Activated naive CD4-positive, alpha-beta T cell treated with anti-CD3 and anti-CD28 coated beads for 36 hours (primary cell): ENCODE measurements at regions of chr16 and their contacts with region 1.

Region 1: DNA sequence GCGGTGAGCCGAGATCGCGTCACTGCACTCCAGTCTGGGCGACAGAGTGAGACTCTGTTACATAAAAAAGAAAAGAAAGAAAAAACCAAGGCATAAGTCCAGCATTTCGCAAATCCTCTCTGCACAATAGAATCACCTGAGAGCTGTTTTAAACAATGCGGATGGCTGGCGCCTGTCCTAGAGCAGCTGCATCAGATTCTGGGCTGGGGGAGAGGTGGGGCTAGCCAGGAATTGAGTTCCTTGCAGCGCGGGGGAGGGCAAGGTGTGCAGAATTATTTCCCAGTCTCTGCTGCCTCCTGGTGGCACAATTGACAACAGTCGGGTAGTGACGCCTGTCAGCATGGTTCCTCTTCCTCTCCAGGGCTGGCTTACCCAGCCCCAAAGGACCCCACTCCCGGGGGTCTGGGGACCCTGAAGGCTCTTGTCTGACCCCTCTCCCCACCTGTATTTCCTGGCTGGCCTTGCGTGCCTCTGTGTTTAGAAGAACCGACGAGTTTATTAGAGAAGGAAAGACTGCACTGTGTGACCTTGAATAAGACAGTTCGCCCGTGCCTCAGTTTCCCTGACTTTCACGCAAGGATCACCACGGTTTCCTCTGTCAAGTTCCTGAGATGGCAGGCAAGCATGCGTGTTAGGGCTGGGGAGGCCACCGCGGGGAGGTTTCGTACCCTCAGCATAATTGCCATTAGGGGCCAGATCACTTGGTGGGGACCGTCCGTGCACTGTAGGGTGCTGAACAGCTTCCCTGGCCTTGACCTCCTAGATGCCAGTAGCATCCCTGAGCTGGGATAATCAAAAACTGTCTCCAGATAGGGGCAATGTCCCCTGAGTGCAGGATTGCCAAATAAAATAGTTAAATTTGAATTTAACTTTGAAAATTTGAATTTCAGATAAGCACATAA is 41.0 kb upstream of the PLCG2 start:
- DNase-seq: peak; percentile 97
- H3K4me3 Mint-ChIP-seq: peak overlapping the region; percentile 61
- H3K27ac Mint-ChIP-seq: peak overlapping the region; percentile 77
- H3K4me1 Mint-ChIP-seq: peaks cover 12% of the 10 kb centered on the region
- H3K27me3 Mint-ChIP-seq: no peaks in the 10 kb centered on the region

Region 2: GRCh38 chr16:80526425-80527061 is 1211.6 kb before region 1 on chr16:
- CTCF ChIA-PET with region 1: no interaction called
- intact Hi-C with region 1: loop called (anchors 10 kb)
- DNase-seq: peak; percentile 74
- H3K4me3 Mint-ChIP-seq: no peak overlapping the region
- H3K27ac Mint-ChIP-seq: no peak overlapping the region
- H3K4me1 Mint-ChIP-seq: no peaks in the 10 kb centered on the region
- H3K27me3 Mint-ChIP-seq: no peaks in the 10 kb centered on the region

Region 3: DNA sequence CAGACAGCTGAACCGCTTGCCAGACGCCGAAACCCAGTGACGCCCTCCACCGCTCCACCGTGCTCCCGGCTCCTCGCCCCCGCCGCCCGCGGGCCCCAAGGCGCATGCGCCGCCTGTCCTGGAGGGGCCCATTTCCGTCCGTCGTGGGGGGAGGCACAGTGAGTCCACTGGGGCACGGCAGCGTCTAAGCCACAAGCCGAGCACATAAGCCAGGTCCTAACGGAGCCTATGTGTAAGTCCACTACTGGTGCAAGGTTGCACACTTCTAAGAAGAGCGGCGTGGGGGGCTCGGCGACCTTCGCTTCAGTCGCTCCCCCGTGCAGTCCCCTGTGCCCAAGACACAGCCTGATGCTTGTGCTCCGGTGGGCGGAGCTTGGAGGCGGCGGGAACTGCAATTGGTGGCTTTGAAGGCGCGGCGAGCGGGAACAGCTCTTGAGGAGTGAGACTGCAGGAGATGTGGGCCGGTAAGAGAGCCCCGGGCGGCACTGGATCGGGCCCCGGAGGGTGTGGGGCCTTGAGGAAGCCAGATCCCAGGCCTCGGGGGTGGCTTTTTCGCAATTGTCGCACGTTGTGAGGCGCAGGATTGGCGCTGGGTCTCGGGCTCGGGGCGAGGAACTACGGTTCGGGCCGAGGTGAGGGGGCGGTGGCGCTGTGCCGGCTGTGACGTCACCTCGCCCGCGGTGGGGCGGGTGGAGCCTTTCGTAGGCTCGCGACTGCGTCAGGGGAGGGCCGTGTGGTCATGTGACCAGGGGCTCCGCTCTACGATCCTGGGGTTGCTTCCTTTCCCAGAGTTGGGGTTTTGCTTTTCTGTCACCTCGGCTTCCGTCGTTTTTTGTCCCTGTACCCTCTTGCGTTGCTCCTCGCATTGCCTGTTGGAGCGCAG is 731.1 kb before region 1 on chr16 and contains the starts of genes CENPN and CMC2:
- CTCF ChIA-PET with region 1: no interaction called
- intact Hi-C with region 1: loop called (anchors 1 kb)
- DNase-seq: peak; percentile 98
- H3K4me3 Mint-ChIP-seq: peak within 1 kb of the TSS; percentile 95
- H3K27ac Mint-ChIP-seq: peak within 1 kb of the TSS; percentile 100
- H3K4me1 Mint-ChIP-seq: peaks cover 50% of the 10 kb centered on the region
- H3K27me3 Mint-ChIP-seq: no peaks in the 10 kb centered on the region
- total RNA-seq, gene CENPN: 65.1 to 75.0 TPM
- total RNA-seq, gene CMC2: 112 to 122 TPM

Region 4: GRCh38 chr16:81204798-81205680 is 533.1 kb before region 1 on chr16:
- CTCF ChIA-PET with region 1: interaction called, 5 read pairs
- intact Hi-C with region 1: loop called (anchors 1 kb)
- DNase-seq: peak; percentile 43
- H3K4me3 Mint-ChIP-seq: no peak overlapping the region
- H3K27ac Mint-ChIP-seq: no peak overlapping the region
- H3K4me1 Mint-ChIP-seq: no peaks in the 10 kb centered on the region
- H3K27me3 Mint-ChIP-seq: peaks cover 3% of the 10 kb centered on the region

Region 5: GRCh38 chr16:81403616-81404373 is 334.3 kb before region 1 on chr16:
- CTCF ChIA-PET with region 1: interaction called, 8 read pairs
- intact Hi-C with region 1: loop called (anchors 1 kb)
- DNase-seq: peak; percentile 89
- H3K4me3 Mint-ChIP-seq: no peak overlapping the region
- H3K27ac Mint-ChIP-seq: no peak overlapping the region
- H3K4me1 Mint-ChIP-seq: no peaks in the 10 kb centered on the region
- H3K27me3 Mint-ChIP-seq: no peaks in the 10 kb centered on the region

Region 6: GRCh38 chr16:81808933-81809496 is 70.9 kb after region 1 on chr16:
- CTCF ChIA-PET with region 1: no interaction called
- intact Hi-C with region 1: no loop called
- DNase-seq: no peak
- H3K4me3 Mint-ChIP-seq: no peak overlapping the region
- H3K27ac Mint-ChIP-seq: no peak overlapping the region
- H3K4me1 Mint-ChIP-seq: peaks cover 4% of the 10 kb centered on the region
- H3K27me3 Mint-ChIP-seq: no peaks in the 10 kb centered on the region

Region 7: GRCh38 chr16:81873843-81874752 is 136.0 kb after region 1 on chr16:
- CTCF ChIA-PET with region 1: interaction called, 10 read pairs
- intact Hi-C with region 1: no loop called
- DNase-seq: peak; percentile 83
- H3K4me3 Mint-ChIP-seq: no peak overlapping the region
- H3K27ac Mint-ChIP-seq: no peak overlapping the region
- H3K4me1 Mint-ChIP-seq: peaks cover 12% of the 10 kb centered on the region
- H3K27me3 Mint-ChIP-seq: peaks cover 8% of the 10 kb centered on the region